GM23248 (cell line): ENCODE measurements at regions of chr12 and their contacts with region 1.

Region 1: GRCh38 chr12:14362352-14362751 is 3.1 kb upstream of the ATF7IP start:
- DNase-seq: no peak
- H3K4me3 ChIP-seq: no peak overlapping the region
- H3K27ac ChIP-seq: no peak overlapping the region
- H3K4me1 ChIP-seq: no peaks in the 10 kb centered on the region; the same call in none of the 2 replicates
- H3K27me3 ChIP-seq: no peaks in the 10 kb centered on the region

Region 2: GRCh38 chr12:14257734-14258574 is 104.4 kb before region 1 on chr12:
- in situ Hi-C with region 1: loop called (anchors 5 kb)
- DNase-seq: peak; percentile 96
- H3K4me3 ChIP-seq: peak overlapping the region; percentile 38
- H3K27ac ChIP-seq: peak overlapping the region; percentile 93
- H3K4me1 ChIP-seq: peaks cover 50% of the 10 kb centered on the region
- H3K27me3 ChIP-seq: no peaks in the 10 kb centered on the region

Region 3: DNA sequence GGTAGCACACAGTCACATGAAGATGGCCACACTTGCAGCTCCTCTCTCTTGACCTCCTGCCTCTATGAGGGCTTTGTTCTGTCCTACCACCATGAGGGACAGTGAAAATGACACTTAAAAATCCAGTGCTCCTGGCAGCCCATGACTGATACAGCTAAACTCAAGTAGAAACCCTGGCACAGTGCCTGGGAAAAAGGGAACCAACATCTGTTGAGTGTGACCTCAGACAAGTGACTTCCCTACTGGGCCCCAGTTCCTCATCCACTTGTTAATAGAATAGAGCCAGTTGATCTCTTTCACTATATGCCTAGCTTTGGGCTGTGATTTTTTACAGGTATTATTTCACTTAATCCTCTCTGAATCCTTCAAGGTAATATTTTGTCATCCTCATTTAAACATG is 329.2 kb after region 1 on chr12:
- in situ Hi-C with region 1: no loop called
- DNase-seq: no peak
- H3K4me3 ChIP-seq: no peak overlapping the region
- H3K27ac ChIP-seq: no peak overlapping the region
- H3K4me1 ChIP-seq: no peaks in the 10 kb centered on the region
- H3K27me3 ChIP-seq: peaks cover 5% of the 10 kb centered on the region; the same call in 1 of the 2 replicates